Activated CD4-positive, alpha-beta memory T cell treated with anti-CD3 and anti-CD28 coated beads for 36 hours (primary cell): ENCODE measurements at regions of chr1 and their contacts with region 1.

Region 1: DNA sequence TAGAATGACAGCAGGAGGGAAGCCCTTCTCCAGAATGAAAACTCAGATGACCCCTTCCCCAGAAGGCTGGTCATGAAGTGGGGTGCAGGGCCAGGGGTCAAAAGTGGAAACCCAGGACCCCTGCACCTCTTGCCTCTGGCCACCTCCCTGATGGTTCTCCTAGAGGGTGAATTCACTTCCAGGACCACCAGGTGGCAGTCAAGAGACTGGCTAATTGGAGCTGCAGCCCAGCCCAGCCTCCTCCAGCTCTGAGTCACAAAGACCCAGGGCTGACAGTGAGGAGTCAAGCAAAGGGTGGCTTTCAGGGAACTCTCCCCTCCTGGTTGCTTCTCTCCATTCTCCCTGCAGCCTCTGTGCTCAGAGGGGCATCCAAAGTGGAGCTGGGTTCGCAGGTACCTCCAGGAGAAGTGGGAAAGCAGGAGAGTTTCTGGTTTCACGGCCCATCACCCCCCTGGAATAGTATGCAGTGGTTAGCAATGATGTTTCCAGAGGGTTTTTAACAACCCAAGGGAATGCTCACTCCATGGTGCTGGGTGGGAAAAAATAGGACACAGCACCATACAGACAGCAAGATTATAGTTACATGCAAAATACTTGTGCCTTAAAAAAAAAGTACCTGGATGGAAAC is 6.1 kb upstream of the EPHB2 start:
- DNase-seq: peak; percentile 86
- H3K4me3 Mint-ChIP-seq: no peak overlapping the region
- H3K27ac Mint-ChIP-seq: no peak overlapping the region
- H3K4me1 Mint-ChIP-seq: peaks cover under 1% of the 10 kb centered on the region
- H3K27me3 Mint-ChIP-seq: peaks cover 37% of the 10 kb centered on the region

Region 2: DNA sequence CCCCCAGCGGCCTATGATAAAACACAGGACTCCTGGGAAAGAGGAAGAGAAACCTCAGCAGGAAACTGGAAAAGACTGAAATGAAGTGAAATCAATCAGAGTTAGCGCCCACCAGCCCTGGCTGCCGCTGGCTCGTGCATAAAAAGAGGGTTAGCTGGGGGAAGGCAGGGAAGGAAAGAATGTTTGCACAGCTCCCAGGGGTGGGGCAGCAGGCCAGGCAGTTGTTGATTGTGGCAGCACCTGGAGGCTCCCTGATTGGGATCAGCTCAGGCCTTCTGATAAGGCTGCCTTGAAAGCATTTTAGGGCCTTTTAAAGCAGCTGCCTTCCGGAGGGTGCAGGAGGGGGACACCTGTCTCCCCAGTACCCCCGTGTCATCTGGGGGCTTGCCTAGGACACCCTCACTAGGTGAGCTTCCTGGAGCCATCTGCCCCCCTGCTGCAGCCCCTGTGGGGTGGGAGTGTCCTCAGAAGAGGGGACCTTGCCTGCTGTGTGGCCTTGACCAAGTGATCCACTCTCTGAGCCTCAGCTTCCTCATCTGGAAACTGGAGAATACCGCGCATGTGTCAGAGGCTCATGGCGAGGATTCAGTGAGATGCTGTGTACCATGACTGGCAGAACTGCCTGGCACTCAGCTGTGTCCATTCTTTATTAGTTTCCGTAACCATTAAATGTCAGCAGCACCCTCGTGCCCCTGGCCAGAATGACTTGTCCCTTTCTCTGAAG is 12.6 kb after region 1 on chr1:
- CTCF ChIA-PET with region 1: interaction called, 18 read pairs
- POLR2A ChIA-PET with region 1: no interaction called
- intact Hi-C with region 1: no loop called
- DNase-seq: no peak
- H3K4me3 Mint-ChIP-seq: no peak overlapping the region
- H3K27ac Mint-ChIP-seq: no peak overlapping the region
- H3K4me1 Mint-ChIP-seq: peaks cover 7% of the 10 kb centered on the region
- H3K27me3 Mint-ChIP-seq: peaks cover 46% of the 10 kb centered on the region

Region 3: GRCh38 chr1:22861764-22862440 is 157.3 kb after region 1 on chr1:
- CTCF ChIA-PET with region 1: interaction called, 15 read pairs
- POLR2A ChIA-PET with region 1: no interaction called
- intact Hi-C with region 1: loop called (anchors 1 kb)
- DNase-seq: peak; percentile 18
- H3K4me3 Mint-ChIP-seq: no peak overlapping the region
- H3K27ac Mint-ChIP-seq: no peak overlapping the region
- H3K4me1 Mint-ChIP-seq: no peaks in the 10 kb centered on the region
- H3K27me3 Mint-ChIP-seq: peaks cover 7% of the 10 kb centered on the region

Region 4: DNA sequence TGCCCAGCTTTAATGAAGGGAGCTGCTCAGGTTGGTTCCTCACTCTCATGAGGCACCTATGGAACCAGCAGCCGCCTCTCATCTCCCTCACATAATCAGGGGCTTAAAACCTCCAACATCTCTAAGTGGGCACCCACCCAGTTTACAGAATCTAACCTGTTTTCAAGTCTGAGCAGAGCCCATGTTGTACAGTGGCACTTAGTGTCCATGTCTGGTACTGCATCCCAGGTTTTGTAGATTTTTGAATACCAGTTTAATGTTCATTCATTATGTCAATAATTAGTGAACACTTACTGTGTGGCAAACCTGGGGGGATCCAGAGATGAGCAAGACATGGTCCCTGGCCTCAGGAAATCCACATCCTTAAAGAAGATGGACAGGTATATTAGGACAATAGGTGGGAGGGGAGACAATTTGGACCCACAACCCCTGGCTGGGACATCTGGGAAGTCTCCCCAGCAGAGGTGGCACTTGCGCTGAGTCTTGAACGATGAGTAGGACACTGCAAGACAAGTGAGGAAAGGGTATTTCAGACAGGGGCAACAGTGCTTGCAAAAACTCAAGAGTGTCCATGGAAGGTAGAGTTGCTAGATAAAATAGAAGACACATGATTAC is 184.8 kb after region 1 on chr1:
- CTCF ChIA-PET with region 1: interaction called, 32 read pairs
- POLR2A ChIA-PET with region 1: no interaction called
- intact Hi-C with region 1: loop called (anchors 1 kb)
- DNase-seq: peak; percentile 13
- H3K4me3 Mint-ChIP-seq: no peak overlapping the region
- H3K27ac Mint-ChIP-seq: no peak overlapping the region
- H3K4me1 Mint-ChIP-seq: peaks cover 9% of the 10 kb centered on the region
- H3K27me3 Mint-ChIP-seq: no peaks in the 10 kb centered on the region

Region 5: DNA sequence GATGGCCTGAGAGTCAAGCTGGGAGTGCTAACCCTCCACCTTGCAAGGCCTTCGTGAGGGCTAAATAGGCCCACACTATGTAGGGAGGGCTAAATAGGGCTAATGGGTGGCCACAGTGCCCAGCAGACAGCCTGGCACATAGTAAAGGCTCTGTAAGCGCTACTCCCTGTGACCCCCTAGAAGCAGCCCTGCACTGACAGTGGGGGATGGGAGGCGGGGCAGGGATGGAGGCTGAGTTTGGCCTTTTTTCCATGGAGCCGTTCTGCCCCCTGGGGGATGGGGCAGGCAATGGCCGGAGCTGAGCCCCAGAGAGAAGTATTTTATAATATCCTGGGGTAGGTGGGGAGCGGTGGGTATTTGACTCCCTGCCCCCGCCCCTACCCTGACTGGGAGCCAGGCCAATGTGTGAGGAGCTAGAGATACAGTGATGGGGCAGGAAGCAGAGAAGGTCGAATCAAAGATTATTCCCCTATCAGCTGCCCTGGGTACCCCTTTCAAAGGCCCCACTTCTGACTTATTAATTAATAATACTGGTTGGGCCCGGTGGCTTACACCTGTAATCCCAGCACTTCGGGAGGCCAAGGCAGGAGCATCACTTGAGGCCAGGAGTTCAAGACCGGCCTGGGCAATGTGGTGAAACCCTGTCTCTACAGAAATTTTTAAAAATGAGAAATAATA is 225.8 kb after region 1 on chr1:
- CTCF ChIA-PET with region 1: interaction called, 18 read pairs
- POLR2A ChIA-PET with region 1: no interaction called
- intact Hi-C with region 1: no loop called
- DNase-seq: peak; percentile 42
- H3K4me3 Mint-ChIP-seq: no peak overlapping the region
- H3K27ac Mint-ChIP-seq: no peak overlapping the region
- H3K4me1 Mint-ChIP-seq: no peaks in the 10 kb centered on the region
- H3K27me3 Mint-ChIP-seq: peaks cover 16% of the 10 kb centered on the region

Region 6: DNA sequence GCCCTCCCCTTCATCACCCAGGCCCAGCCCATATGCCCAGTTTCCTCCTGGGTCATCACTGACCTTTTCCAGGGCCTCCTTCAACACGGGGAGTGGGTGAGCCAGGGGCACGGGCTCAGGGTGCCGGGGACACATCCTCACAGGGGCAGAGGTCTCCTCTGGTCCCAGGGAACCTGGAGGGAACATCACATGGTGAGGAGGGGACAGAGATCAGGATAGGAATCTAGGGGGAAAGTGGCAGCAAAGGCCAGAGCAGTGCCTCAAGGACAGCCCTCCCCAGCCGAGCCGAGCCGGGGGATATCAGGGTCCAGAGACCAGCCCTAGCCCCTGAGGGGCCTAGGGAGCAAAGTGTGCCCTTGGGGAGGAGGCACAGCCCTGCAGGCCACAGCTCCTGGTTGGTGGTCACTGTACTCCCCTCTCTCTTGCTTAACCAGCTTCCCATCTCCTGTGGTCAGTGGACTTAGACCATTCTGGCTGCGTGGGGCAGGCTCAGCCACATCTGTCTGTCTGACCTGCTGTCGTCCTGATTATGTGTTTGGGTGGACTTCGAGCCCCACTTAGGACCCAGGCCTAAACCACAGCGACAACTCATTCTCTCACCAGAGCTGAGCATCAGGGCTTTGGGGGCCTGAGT is 258.6 kb after region 1 on chr1:
- CTCF ChIA-PET with region 1: interaction called, 36 read pairs
- POLR2A ChIA-PET with region 1: no interaction called
- intact Hi-C with region 1: no loop called
- DNase-seq: no peak
- H3K4me3 Mint-ChIP-seq: no peak overlapping the region
- H3K27ac Mint-ChIP-seq: no peak overlapping the region
- H3K4me1 Mint-ChIP-seq: no peaks in the 10 kb centered on the region
- H3K27me3 Mint-ChIP-seq: peaks cover 6% of the 10 kb centered on the region